ENCODE measurements at regions of chr17 and their contacts with region 1.

Region 1: GRCh38 chr17:39729280-39729851 is 966 bp downstream of the MIEN1 start:
- DNase-seq: no peak
- H3K4me3 ChIP-seq: peak overlapping the region; percentile 74 to 92 (median 88)
- H3K27ac ChIP-seq: peak overlapping the region; percentile 87 to 92 (median 90)
- H3K4me1 ChIP-seq: peaks cover 11 to 22% (median 16%) of the 10 kb centered on the region in 4 donors
- H3K27me3 ChIP-seq: no peaks in the 10 kb centered on the region
- CTCF ChIP-seq: no peak
- EP300 ChIP-seq: no peak
- POLR2A ChIP-seq: no peak

Region 2: DNA sequence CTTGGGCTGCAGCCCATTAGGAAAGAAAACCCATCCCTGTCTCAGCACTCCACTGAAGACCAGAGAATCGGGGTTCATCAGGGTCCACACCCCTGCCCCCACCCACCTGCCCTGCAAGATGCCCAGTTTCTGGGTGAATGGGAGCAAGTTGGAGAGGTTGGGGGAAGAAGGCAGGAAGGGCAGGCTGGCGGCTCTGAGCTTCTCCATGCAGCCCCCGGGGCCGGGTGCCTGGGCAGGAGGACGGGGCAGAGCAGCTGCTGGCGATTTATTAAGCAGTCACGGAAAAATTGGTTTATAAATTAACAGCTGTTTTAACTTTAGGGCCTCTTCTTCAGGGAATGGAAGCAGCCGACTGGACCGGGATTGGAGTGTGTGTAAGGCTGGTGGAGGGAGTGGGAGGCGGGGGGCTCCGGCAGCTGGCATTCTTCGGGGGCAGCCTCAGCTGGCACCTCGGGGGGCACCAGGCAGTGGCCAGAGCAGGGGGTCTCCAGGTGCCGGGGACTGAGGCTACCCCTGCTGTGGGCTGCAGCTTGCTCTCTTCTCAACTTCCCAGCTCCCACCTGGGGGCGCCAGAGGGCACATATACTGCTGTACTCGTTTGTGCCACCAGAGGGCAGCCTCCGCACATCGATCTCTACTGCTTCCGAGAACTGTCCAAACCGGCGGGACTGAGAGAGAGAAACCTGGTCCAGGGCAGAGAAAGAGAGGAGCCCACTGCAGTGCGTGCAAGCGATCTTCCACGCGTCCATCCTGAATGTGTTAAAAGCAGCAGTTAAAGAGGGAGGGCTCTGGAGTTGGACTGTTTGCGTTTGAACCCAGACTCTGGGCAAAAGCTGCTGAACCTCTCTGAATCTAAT is 107.6 kb before region 1 on chr17:
- intact Hi-C with region 1: loop called (anchors 5 kb)
- DNase-seq: peak; percentile 99
- H3K4me3 ChIP-seq: no peak overlapping the region
- H3K27ac ChIP-seq: no peak overlapping the region
- H3K4me1 ChIP-seq: peaks cover 3 to 47% (median 36%) of the 10 kb centered on the region in 4 donors
- H3K27me3 ChIP-seq: peaks cover 0 to 48% (median 11%) of the 10 kb centered on the region in 4 donors
- CTCF ChIP-seq: peak; percentile 99 to 100 (median 100)
- EP300 ChIP-seq: no peak
- POLR2A ChIP-seq: no peak

Region 3: GRCh38 chr17:39636927-39637736 is 92.2 kb before region 1 on chr17 and contains the start of gene STARD3:
- intact Hi-C with region 1: loop called (anchors 5 kb)
- DNase-seq: peak; percentile 97
- H3K4me3 ChIP-seq: peak within 1 kb of the TSS; percentile 78 to 95 (median 90)
- H3K27ac ChIP-seq: peak within 1 kb of the TSS; percentile 83 to 90 (median 89)
- H3K4me1 ChIP-seq: peaks cover 52 to 75% (median 66%) of the 10 kb centered on the region in 4 donors
- H3K27me3 ChIP-seq: peaks cover 0 to 6% (median 0%) of the 10 kb centered on the region in 4 donors
- CTCF ChIP-seq: peak in 2 of 3 experiments; percentile 17 to 23
- EP300 ChIP-seq: no peak
- POLR2A ChIP-seq: peak; percentile 6
- total RNA-seq, gene STARD3: 27.5 to 47.3 (median 38.6) TPM

Region 4: DNA sequence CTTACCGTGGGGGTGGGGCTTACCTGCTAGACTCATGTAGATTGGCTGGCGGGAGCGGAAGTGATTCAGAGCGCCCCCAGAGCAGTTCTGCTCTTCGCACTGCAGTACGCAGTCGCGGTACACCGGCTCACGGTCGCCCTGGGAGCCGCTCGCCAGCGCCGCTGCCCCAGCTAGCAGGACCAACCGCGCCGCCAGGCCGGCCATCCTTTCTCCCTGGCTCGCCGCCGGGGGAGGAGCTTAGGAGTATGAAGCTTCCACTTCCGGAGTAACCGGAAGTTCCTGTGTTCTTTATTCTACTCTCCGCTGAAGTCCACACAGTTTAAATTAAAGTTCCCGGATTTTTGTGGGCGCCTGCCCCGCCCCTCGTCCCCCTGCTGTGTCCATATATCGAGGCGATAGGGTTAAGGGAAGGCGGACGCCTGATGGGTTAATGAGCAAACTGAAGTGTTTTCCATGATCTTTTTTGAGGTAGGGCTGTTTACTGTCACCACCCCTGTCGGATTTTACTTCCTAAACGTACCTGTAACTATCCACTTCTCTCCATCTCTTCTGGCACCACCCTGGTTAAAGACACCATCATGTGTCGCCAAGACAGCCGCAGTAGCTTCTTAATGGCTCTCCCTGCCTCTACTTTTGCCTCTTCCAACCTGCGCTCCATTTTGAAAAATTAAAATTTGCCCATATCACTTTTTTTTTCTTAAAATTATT is 41.4 kb before region 1 on chr17 and contains the start of gene PGAP3:
- intact Hi-C with region 1: loop called (anchors 5 kb)
- DNase-seq: peak; percentile 97
- H3K4me3 ChIP-seq: peak within 1 kb of the TSS; percentile 68 to 81 (median 72)
- H3K27ac ChIP-seq: peak within 1 kb of the TSS; percentile 83 to 91 (median 86)
- H3K4me1 ChIP-seq: peaks cover 11 to 22% (median 17%) of the 10 kb centered on the region in 4 donors
- H3K27me3 ChIP-seq: no peaks in the 10 kb centered on the region
- CTCF ChIP-seq: peak in 1 of 3 experiments; percentile 22
- EP300 ChIP-seq: no peak
- POLR2A ChIP-seq: no peak
- total RNA-seq, gene PGAP3: 6.2 to 9.4 (median 8.5) TPM

Measured in esophagus muscularis mucosa (tissue), 4 donors.